ENCODE measurements at regions of chr2 and their contacts with region 1.

Region 1: GRCh38 chr2:241309684-241310117 is 5.8 kb downstream of the HDLBP start:
- DNase-seq: no peak
- H3K4me3 ChIP-seq: no peak overlapping the region
- H3K27ac ChIP-seq: no peak overlapping the region
- H3K4me1 ChIP-seq: peaks cover 54% of the 10 kb centered on the region
- H3K27me3 ChIP-seq: no peaks in the 10 kb centered on the region
- CTCF ChIP-seq: no peak
- POLR2A ChIP-seq: no peak

Region 2: GRCh38 chr2:240799033-240799820 is 510.5 kb before region 1 on chr2:
- intact Hi-C with region 1: no loop called
- DNase-seq: no peak
- H3K4me3 ChIP-seq: no peak overlapping the region
- H3K27ac ChIP-seq: no peak overlapping the region
- H3K4me1 ChIP-seq: no peaks in the 10 kb centered on the region
- H3K27me3 ChIP-seq: no peaks in the 10 kb centered on the region
- CTCF ChIP-seq: no peak
- POLR2A ChIP-seq: no peak

Region 3: GRCh38 chr2:241224018-241224850 is 85.5 kb before region 1 on chr2:
- intact Hi-C with region 1: loop called (anchors 10 kb)
- DNase-seq: no peak
- H3K4me3 ChIP-seq: no peak overlapping the region
- H3K27ac ChIP-seq: no peak overlapping the region
- H3K4me1 ChIP-seq: peaks cover 12% of the 10 kb centered on the region
- H3K27me3 ChIP-seq: no peaks in the 10 kb centered on the region
- CTCF ChIP-seq: no peak
- POLR2A ChIP-seq: no peak